ENCODE measurements at regions of chr2 and their contacts with region 1.

Region 1: DNA sequence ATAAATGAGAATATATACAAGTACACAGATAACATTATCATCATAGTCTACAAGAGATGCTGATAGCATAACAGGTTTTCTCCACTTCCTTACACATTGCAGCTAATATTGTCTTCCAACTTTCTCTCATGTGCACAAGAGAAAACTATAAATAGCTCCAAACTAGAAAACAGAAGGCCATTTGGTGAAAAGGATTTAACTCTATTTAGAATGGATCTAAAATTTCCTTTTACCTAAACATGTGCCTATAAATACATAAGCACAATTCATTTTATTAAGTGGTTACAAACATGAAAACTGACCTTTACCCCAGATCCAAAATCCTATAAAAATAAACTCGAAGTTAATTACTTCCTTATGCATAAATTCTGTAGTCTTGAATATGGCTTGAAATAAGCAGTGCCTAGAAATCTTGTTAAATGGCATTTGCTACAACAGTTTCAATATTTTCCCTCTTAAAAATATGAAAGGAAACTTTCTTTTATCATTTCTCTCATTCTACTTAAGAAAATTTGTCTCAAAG is 41.6 kb downstream of the SLC25A12 start:
- DNase-seq: no peak
- H3K4me3 ChIP-seq: no peak overlapping the region
- H3K27ac ChIP-seq: no peak overlapping the region
- H3K4me1 ChIP-seq: no peaks in the 10 kb centered on the region
- H3K27me3 ChIP-seq: no peaks in the 10 kb centered on the region
- CTCF ChIP-seq: no peak

Region 2: DNA sequence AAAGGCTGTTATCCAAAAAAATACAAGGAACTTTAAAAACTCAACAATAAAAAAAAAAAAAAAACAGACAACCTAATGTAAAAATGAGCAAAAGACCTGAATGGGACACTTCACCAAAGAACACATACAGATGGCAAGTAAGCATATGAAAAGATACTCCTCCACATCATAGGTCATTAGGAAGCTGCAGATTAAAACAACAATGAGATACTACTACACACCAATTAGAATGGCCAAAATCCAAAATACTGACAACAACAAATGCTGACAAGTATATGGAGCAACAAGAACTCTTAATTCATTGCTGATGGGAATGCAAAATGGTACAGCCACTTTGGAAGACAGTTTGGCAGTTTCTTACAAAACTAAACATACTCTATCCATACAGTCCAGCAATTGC is 81.0 kb before region 1 on chr2:
- CTCF ChIA-PET with region 1: no interaction called
- POLR2A ChIA-PET with region 1: interaction called, 13 read pairs
- intact Hi-C with region 1: no loop called
- DNase-seq: no peak
- H3K4me3 ChIP-seq: no peak overlapping the region
- H3K27ac ChIP-seq: no peak overlapping the region
- H3K4me1 ChIP-seq: no peaks in the 10 kb centered on the region
- H3K27me3 ChIP-seq: no peaks in the 10 kb centered on the region
- CTCF ChIP-seq: no peak

Measured in PC-9 (cell line).